Uterus (tissue), 4 donors: ENCODE measurements at regions of chr15 and their contacts with region 1.

Region 1: DNA sequence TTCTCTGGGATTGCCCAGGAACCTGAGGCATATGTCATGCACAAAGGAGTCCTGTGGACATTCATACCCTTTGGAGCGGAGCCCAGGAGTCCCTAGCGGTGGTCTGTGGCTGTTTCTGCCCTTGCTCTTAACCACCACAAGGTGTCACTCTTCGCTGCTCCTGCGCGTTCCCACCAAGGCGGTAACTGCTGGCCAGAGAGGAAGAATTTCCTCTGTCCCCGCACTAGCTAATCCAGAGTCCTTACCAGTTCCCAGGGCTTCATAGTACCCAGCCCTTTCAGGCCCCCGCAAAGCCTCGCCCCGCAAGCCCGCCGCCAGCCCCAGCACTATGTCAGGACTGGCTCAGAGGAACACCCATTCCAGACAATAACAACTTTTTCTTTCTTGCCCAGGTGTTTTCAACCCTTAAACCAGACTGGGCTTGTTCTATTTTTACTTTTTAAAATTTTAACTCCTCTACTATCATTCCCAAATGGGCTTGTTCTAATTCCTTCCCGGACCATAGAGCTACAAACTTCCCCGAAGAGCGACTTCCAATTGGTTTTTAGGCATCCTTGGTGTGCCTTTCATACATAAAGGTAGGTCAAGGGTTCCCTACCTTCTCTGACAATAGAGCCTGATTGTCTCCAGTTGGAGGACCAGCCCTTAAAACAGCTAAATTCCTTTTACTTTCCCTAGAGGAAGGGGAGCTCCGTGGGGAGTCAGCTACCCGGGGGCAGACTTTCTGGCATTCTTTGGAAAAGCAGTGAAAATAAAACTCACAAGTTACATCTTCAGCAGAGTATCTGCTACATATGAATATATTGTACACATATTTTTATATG is 31.8 kb upstream of the ZNF774 start:
- DNase-seq: peak; percentile 87 to 88
- H3K4me3 ChIP-seq: no peak overlapping the region
- H3K27ac ChIP-seq: peak overlapping the region; percentile 76 to 88
- H3K4me1 ChIP-seq: peaks cover 0 to 3% of the 10 kb centered on the region in 2 donors
- H3K27me3 ChIP-seq: no peaks in the 10 kb centered on the region
- CTCF ChIP-seq: peak; percentile 99 to 100 (median 100)
- POLR2A ChIP-seq: peak in 1 of 2 donors; percentile 23

Region 2: DNA sequence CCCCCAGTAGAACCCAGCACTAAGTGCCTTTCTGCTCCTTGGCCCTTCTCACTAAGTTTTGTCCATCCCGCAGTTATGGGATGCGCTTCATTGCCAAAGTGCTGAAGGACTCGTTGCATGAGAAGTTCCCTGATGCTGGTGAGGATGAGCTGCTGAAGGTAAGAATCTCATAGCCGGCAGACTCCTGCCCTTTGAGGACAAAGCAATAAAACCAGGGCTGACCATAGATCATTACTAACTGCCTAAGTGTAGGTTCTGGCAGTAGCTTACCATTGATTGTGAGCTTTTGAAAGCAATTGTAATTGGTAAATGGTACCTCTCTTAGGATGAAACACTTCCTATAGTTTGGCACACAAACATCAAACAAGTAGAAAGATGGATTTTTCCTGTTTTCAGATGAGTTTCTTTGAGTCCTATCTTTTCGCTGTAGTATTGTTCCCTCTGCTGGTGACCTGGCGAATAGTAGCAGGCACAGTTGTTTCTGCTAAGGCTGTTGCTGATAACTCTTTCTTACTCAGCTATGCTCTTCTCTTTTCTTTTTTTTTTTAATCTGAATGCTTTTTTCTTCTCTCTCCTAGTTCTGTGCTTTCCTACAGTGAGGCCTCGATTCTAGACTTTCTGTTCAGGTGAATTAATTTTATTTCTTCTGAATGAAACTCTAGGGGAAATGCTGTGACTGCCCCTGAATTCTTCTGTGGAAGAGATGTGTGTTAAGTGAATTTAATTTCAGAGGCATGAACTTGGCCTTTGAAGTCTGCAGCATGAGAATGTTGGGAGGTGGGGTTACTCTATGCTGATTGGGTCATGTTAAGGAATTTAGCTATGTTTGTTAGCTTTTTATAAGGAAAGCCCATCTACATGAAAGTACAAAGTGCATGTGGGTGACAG is 162.1 kb after region 1 on chr15:
- intact Hi-C with region 1: loop called (anchors 5 kb)
- DNase-seq: peak; percentile 40 to 71
- H3K4me3 ChIP-seq: no peak overlapping the region
- H3K27ac ChIP-seq: peak overlapping the region; percentile 63 to 73
- H3K4me1 ChIP-seq: no peaks in the 10 kb centered on the region
- H3K27me3 ChIP-seq: no peaks in the 10 kb centered on the region
- CTCF ChIP-seq: peak; percentile 81 to 92 (median 84)
- POLR2A ChIP-seq: no peak